ENCODE measurements at regions of chr6 and their contacts with region 1.

Region 1: DNA sequence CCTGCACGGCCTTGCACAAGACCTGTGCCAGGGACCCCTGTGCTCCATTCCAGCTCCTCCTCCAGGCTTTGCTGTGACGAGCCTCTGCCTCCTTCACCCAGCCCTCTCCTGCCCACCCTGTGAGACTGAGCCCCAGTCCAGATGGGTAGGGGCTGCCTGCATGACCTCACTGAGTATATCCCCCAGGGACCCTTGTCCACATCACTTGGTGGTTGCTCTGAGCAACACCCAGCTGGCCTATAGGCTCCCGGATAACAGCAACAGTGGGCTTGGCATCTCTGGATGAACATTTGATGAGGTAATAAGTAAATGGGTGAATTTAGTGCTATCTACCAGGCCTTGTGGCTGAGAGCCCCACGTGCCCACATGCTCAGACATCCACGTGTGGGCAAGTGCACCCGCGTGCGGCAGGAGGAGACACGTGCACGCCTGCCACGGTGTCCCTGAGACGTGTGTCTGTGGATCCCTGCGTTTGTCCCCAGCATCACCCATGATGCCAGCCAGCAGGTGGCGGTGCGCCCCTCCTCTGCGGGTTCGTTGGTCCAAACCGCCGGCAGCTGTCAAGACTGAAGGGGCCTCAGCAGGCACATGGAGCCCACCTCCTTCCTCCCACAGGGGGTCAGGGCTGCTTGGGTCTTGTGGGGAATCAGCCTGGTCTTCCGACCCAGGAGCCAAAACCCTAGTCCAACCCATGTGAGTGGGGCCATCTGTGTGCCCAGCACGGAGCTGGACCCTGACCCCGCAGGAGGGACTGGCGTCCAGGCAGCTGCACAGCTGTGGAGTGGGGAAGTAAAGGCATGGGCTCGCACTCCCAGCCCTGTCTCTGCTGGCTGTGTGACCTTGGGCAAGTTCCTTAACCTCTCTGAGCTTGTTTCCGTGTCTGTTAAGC is 45.9 kb downstream of the FGD2 start:
- DNase-seq: peak; percentile 93 to 96
- H3K4me3 ChIP-seq: no peak overlapping the region
- H3K27ac ChIP-seq: peak overlapping the region in 3 of 5 donors; percentile 35 to 86 (median 80)
- H3K4me1 ChIP-seq: peaks cover 10 to 40% (median 26%) of the 10 kb centered on the region in 4 donors
- H3K27me3 ChIP-seq: no peaks in the 10 kb centered on the region
- CTCF ChIP-seq: peak in 6 of 7 experiments; percentile 63 to 96 (median 84)
- EP300 ChIP-seq: no peak
- POLR2A ChIP-seq: no peak

Region 2: GRCh38 chr6:37171970-37172812 is 120.8 kb after region 1 on chr6:
- intact Hi-C with region 1: loop called (anchors 2 kb)
- DNase-seq: peak; percentile 94 to 95
- H3K4me3 ChIP-seq: peak overlapping the region; percentile 83 to 96 (median 92)
- H3K27ac ChIP-seq: peak overlapping the region; percentile 84 to 99 (median 95)
- H3K4me1 ChIP-seq: peaks cover 14 to 64% (median 45%) of the 10 kb centered on the region in 4 donors
- H3K27me3 ChIP-seq: no peaks in the 10 kb centered on the region
- CTCF ChIP-seq: peak in 6 of 7 experiments; percentile 77 to 99 (median 96)
- EP300 ChIP-seq: no peak
- POLR2A ChIP-seq: no peak